ENCODE measurements at regions of chr2 and their contacts with region 1.

Region 1: GRCh38 chr2:226215902-226216503 is 583.6 kb downstream of the IRS1 start:
- DNase-seq: peak; percentile 87
- H3K4me3 ChIP-seq: no peak overlapping the region
- H3K27ac ChIP-seq: no peak overlapping the region
- H3K4me1 ChIP-seq: peaks cover 7% of the 10 kb centered on the region
- H3K27me3 ChIP-seq: no peaks in the 10 kb centered on the region
- CTCF ChIP-seq: peak; percentile 94

Region 2: DNA sequence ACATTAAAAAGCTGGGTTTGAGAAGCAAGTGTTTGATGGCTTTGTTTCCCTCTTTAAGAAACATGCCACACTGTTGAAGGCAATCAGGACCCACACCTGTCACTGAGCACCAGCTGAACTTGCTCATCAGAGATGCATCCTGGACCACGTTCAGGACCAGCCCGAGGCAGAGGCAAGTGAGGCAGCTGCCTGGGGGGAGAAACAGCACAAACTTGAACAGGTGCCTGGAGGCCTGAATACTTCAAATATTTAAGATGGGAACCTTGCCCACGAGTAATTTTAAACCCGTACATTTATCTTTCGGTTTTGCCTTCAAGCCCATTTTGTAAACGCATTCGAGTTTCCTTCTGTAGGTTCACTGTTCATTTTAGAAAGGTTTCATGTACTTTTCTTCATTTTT is 395.2 kb before region 1 on chr2:
- CTCF ChIA-PET with region 1: no interaction called
- POLR2A ChIA-PET with region 1: no interaction called
- intact Hi-C with region 1: no loop called
- DNase-seq: no peak
- H3K4me3 ChIP-seq: no peak overlapping the region
- H3K27ac ChIP-seq: no peak overlapping the region
- H3K4me1 ChIP-seq: no peaks in the 10 kb centered on the region
- H3K27me3 ChIP-seq: no peaks in the 10 kb centered on the region
- CTCF ChIP-seq: no peak

Region 3: GRCh38 chr2:225889446-225889850 is 326.6 kb before region 1 on chr2:
- CTCF ChIA-PET with region 1: no interaction called
- POLR2A ChIA-PET with region 1: no interaction called
- intact Hi-C with region 1: loop called (anchors 10 kb)
- DNase-seq: peak; percentile 75
- H3K4me3 ChIP-seq: no peak overlapping the region
- H3K27ac ChIP-seq: no peak overlapping the region
- H3K4me1 ChIP-seq: peaks cover 7% of the 10 kb centered on the region
- H3K27me3 ChIP-seq: no peaks in the 10 kb centered on the region
- CTCF ChIP-seq: peak; percentile 82

Region 4: DNA sequence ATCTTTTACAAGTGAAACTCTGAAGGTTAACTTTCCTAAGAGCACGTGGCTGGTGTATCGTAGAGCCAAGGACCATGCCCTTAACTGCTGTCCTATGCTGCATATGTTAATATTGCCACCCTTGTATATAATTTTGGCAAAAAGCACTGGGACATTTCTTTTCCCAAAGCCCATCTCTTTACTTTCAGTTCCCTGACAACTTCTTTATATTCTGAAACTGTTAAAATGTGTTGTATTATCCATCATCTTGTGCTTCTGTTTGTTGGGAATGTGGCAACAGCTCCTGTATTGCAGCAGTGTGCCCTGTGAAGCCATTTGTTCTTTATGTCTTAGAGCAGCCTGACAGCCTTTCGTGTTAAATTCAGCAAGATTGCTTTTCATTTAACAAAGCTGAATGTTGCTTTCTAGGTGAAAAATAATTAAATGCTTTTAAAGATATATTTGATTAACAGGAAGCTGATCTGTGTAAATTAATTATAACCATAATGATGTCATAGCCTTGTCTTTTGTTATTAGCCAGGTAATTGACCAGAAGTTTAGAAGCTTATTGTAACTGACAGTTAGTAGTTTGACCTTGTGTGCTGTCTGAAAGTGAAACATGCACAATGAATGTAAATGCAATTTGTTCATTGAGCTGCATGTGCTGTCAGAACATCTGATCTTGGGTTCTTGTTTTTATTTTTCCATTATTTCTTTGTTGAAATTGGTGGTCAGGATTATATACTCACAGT is 629.5 kb after region 1 on chr2:
- CTCF ChIA-PET with region 1: interaction called, 10 read pairs
- POLR2A ChIA-PET with region 1: no interaction called
- intact Hi-C with region 1: no loop called
- DNase-seq: no peak
- H3K4me3 ChIP-seq: no peak overlapping the region
- H3K27ac ChIP-seq: no peak overlapping the region
- H3K4me1 ChIP-seq: no peaks in the 10 kb centered on the region
- H3K27me3 ChIP-seq: no peaks in the 10 kb centered on the region
- CTCF ChIP-seq: no peak

Measured in A673 (cell line).